Activated CD4-positive, alpha-beta memory T cell treated with anti-CD3 and anti-CD28 coated beads, Interleukin-2, amount 10 ng/mL, durations not matched to agents 7 days and 5 days (primary cell): ENCODE measurements at regions of chr3 and their contacts with region 1.

Region 1: DNA sequence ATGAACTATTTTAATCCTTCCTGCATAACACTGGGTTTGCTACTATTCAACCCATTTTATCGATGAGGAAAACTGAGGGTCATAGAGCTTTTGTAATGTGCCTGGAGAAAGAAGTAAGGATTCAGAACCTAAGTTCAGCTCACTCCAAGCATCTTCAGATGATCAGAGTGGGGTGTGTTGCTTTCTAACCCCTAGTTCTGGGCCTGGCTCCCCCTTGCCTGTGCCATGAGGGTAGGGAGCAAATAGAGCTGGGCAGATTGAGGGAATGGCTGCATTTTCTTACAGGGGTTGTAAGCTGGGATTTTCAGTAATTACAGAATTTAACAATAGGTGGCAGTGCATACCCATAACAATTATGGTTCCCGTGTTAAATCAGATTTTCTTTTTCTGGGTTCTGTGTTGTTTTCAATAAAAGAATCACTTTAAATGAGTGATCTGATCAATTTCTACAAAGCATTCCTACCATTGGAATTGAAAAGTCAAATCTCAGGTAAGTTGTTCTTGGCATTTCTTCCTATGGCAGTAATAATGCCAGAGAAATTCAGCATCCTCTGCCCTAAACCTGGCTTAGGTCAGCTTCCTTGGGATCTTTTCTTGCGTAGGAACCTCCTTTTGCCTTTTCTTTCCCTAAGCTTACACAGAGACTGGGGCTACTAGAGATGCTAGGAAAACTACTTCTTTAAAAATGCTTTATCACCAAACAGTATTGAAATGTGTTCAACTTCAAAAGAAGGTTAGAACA is 103.8 kb upstream of the IL12A start:
- DNase-seq: no peak
- H3K4me3 Mint-ChIP-seq: no peak overlapping the region
- H3K27ac Mint-ChIP-seq: no peak overlapping the region
- H3K4me1 Mint-ChIP-seq: no peaks in the 10 kb centered on the region
- H3K27me3 Mint-ChIP-seq: peaks cover 27% of the 10 kb centered on the region

Region 2: DNA sequence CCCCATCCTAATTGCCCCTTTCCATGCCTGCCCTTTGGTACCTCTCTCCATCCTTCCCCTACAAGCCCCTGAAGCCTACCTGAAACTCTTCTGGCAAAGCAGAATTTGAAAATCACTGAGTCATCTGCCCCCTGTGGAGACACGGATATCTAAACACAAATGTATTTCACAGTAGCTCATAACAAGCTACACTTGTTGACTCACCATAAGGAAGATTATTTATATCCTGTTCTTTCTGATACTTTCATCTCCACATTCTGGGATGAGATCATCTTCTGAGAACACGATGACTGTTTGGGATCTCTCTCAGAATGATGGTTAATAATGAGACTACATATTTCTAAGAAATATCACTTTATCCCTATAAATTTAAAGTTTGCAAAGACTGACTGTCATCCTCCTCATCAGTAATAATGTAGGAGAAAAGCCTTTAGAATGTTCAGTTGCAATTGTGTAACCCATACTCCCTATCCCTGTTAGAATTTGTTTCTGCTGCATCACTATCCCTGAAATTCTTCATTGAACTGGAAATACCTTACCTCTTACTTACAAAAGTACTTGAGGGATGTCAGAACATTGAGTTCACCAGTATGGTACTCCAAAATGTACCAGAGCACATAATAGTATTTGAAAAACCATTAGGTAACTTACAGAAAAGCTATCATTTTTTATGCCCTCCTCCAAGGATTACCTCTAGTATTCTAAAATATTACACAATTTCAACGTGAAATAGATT is 12.3 kb before region 1 on chr3:
- CTCF ChIA-PET with region 1: interaction called, 32 read pairs
- POLR2A ChIA-PET with region 1: no interaction called
- DNase-seq: no peak
- H3K4me3 Mint-ChIP-seq: no peak overlapping the region
- H3K27ac Mint-ChIP-seq: no peak overlapping the region
- H3K4me1 Mint-ChIP-seq: peaks cover 2% of the 10 kb centered on the region
- H3K27me3 Mint-ChIP-seq: peaks cover 7% of the 10 kb centered on the region

Region 3: DNA sequence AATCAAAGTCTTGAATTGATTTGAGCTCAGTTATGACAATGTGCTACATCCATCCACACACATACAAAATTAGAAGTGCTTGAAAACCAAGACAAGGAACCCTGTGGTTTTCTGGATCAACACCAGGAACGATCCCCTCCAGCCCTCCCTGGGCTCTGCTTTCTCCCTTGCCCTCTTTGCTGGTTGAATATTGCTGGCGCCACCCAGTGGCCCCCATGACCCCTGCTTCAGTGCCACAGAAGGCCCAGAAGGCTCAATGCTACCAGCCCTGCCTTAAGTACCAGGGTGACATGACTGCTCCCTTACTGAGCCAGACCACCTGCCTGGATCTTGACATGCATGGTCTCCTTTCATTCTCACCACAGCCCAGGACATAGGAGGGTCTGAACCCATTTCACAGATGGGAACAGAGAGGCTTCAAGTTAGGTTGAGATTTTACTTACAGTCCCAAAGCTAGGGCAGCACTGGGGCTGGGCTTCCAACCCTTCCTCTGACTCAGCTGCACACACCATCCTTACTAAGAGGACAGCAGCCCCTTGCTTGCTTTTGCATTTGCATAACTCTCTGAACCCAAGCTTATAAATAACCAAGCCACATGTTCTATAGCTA is 118.8 kb after region 1 on chr3:
- CTCF ChIA-PET with region 1: interaction called, 84 read pairs
- POLR2A ChIA-PET with region 1: no interaction called
- DNase-seq: peak; percentile 53
- H3K4me3 Mint-ChIP-seq: no peak overlapping the region
- H3K27ac Mint-ChIP-seq: no peak overlapping the region
- H3K4me1 Mint-ChIP-seq: peaks cover 13% of the 10 kb centered on the region
- H3K27me3 Mint-ChIP-seq: no peaks in the 10 kb centered on the region

Region 4: GRCh38 chr3:160084998-160085397 is 200.2 kb after region 1 on chr3:
- CTCF ChIA-PET with region 1: no interaction called
- POLR2A ChIA-PET with region 1: no interaction called
- DNase-seq: no peak
- H3K4me3 Mint-ChIP-seq: no peak overlapping the region
- H3K27ac Mint-ChIP-seq: no peak overlapping the region
- H3K4me1 Mint-ChIP-seq: no peaks in the 10 kb centered on the region
- H3K27me3 Mint-ChIP-seq: no peaks in the 10 kb centered on the region

Region 5: DNA sequence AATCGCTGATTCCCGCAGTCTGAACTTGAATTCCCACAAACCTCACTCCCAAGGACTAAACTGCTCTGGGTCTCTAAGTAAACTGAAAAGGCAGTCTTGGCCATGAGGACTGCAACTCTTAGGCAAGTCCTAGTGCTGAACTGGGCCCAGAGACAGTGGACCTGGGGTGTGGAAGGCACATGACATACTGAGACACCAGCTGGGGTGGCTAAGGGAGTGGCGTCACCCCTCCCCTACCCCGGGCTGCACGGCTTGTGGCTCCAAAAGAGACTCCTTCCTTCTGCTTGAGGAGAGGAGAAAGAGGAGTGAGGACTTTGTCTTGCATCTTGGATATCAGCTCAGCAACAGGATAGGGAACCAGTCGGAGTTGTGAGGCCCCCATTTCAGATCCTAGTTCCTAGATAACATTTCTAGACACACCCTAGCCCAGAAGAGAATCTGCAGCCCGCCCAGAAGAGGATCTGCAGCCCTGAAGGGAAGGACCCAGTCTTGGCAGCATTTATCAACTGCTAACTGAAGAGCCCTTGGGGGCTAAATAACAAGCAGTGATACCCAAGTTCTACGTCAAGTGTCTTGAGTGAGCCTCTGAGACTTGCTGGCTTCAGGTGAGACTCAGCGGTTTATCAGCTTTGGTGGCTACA is 229.6 kb after region 1 on chr3:
- CTCF ChIA-PET with region 1: no interaction called
- POLR2A ChIA-PET with region 1: no interaction called
- DNase-seq: no peak
- H3K4me3 Mint-ChIP-seq: no peak overlapping the region
- H3K27ac Mint-ChIP-seq: no peak overlapping the region
- H3K4me1 Mint-ChIP-seq: no peaks in the 10 kb centered on the region
- H3K27me3 Mint-ChIP-seq: peaks cover 33% of the 10 kb centered on the region